OCI-LY7 (cell line): ENCODE measurements at regions of chr3 and their contacts with region 1.

Region 1: GRCh38 chr3:179015551-179016020 is 56.0 kb downstream of the ZMAT3 start:
- DNase-seq: peak; percentile 86
- H3K4me3 ChIP-seq: no peak overlapping the region
- H3K27ac ChIP-seq: no peak overlapping the region
- H3K4me1 ChIP-seq: peaks cover 41% of the 10 kb centered on the region
- CTCF ChIP-seq: peak; percentile 97

Region 2: DNA sequence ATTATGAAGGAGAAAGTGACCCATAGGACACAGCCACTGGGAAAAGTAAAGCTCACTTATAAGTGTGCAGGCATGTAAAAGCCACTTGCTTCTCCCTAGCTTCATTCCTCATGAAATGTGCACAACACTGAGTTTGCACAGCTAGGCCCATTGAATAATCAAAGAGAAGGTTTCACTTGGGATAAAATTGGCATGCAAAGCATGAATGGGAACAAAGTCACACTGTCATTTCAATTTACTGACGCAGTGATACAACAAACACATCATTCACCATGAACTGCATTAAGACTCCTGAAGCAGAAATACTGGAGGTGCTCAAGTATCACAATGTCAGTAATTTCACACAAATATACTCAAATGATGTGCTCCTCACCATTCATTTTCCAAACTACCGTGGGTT is 418.2 kb before region 1 on chr3:
- CTCF ChIA-PET with region 1: no interaction called
- POLR2A ChIA-PET with region 1: no interaction called
- intact Hi-C with region 1: no loop called
- DNase-seq: no peak
- H3K4me3 ChIP-seq: no peak overlapping the region
- H3K27ac ChIP-seq: no peak overlapping the region
- H3K4me1 ChIP-seq: no peaks in the 10 kb centered on the region
- CTCF ChIP-seq: no peak

Region 3: DNA sequence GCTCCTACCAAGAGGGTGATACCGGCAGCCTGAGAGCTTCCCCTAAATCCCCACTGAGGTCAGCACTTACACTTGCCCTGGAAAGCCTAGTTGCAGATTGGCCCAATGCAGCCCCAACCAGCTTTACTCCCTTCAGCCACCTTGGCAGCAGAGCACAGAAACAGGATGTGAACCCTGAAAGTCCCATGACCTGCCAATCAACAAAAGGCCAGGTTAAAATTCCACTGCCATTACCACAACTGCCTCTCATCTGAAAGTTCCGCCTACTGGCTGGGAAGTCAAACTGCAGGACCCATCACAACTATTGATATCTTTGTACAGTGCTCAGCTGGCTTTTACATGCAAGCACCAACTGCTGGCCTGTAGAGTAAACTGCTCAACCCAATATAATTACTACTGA is 100.2 kb before region 1 on chr3:
- CTCF ChIA-PET with region 1: no interaction called
- POLR2A ChIA-PET with region 1: no interaction called
- intact Hi-C with region 1: no loop called
- DNase-seq: no peak
- H3K4me3 ChIP-seq: no peak overlapping the region
- H3K27ac ChIP-seq: no peak overlapping the region
- H3K4me1 ChIP-seq: no peaks in the 10 kb centered on the region
- CTCF ChIP-seq: no peak; the same call in 1 of the 2 replicates

Region 4: DNA sequence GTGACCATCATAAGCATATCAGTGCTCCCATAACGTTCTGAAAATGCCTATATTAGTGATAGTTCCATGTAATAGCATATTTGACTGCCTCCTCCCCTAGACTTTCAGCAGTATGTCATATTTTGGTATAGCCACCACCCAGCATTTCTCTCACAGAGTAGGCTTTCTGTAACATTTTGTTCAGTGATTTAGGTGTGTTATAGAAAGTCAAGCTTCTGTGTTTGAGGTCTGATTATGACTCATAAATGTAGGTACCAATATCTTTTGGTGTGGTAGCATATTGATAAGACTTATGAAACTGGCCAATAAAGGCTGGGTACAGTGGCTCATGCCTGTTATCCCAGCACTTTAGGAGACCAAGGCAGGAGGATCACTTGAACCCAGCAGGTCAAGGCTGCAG is 90.3 kb after region 1 on chr3:
- CTCF ChIA-PET with region 1: no interaction called
- POLR2A ChIA-PET with region 1: no interaction called
- intact Hi-C with region 1: loop called (anchors 1 kb)
- DNase-seq: no peak
- H3K4me3 ChIP-seq: no peak overlapping the region
- H3K27ac ChIP-seq: no peak overlapping the region
- H3K4me1 ChIP-seq: no peaks in the 10 kb centered on the region
- CTCF ChIP-seq: no peak